Aorta (tissue), 5 donors: ENCODE measurements at regions of chr3 and their contacts with region 1.

Region 1: GRCh38 chr3:42025370-42026138 is 63.7 kb upstream of the ULK4 start:
- DNase-seq: peak; percentile 94 to 95
- ATAC-seq: peak; percentile 93
- H3K4me3 ChIP-seq: no peak overlapping the region
- H3K27ac ChIP-seq: peak overlapping the region; percentile 73 to 75
- H3K4me1 ChIP-seq: peaks cover 0 to 3% of the 10 kb centered on the region in 2 donors
- H3K27me3 ChIP-seq: no peaks in the 10 kb centered on the region

Region 2: GRCh38 chr3:42071904-42072592 is 46.5 kb after region 1 on chr3:
- intact Hi-C with region 1: loop called (anchors 5 kb)
- DNase-seq: peak; percentile 82 to 86
- ATAC-seq: peak; percentile 89
- H3K4me3 ChIP-seq: peak overlapping the region in 1 of 2 donors; percentile 27
- H3K27ac ChIP-seq: peak overlapping the region; percentile 79 to 100
- H3K4me1 ChIP-seq: peaks cover 2 to 5% of the 10 kb centered on the region in 2 donors
- H3K27me3 ChIP-seq: no peaks in the 10 kb centered on the region

Region 3: GRCh38 chr3:42265059-42265991 is 239.8 kb after region 1 on chr3:
- intact Hi-C with region 1: no loop called
- DNase-seq: no peak
- ATAC-seq: no peak
- H3K4me3 ChIP-seq: no peak overlapping the region
- H3K27ac ChIP-seq: no peak overlapping the region
- H3K4me1 ChIP-seq: no peaks in the 10 kb centered on the region
- H3K27me3 ChIP-seq: no peaks in the 10 kb centered on the region